ENCODE measurements at regions of chr3 and their contacts with region 1.

Region 1: DNA sequence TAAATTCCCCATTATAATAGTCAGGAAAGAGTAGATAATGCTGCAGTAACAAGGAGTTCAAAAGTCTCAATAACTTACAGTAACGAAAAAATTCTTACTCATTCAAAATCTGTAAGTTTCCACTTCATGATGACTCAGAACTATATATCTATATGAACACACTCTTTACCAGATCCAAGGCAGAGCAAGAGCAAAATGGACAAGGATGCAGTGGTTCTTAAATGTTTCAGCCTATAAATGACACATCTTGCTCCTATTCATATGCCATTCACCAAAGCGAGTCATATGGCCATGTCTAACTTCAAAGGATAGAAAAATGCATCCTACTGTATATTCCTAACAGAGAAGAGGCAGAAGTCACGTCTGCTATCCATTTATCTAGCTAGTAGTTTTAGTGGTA is 787.7 kb downstream of the NAALADL2 start:
- DNase-seq: no peak

Region 2: DNA sequence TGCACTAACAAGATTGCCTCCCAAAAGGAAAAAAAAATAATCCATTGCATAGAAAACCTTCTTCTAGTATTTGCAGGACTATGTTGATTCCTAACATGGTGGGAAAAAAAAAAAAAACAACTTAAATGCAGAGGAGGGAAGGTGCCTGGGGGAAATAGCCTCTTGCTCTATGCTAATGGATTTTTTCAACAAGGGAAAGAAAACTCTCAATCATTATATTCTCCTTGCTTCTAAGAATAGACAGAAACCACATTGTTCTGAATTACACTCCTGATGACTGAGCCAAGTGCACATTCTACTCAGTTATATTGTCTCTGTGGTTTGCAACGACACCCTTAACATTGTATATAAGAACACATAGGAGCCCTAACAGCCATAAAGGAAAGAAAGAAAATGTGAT is 27.5 kb before region 1 on chr3:
- intact Hi-C with region 1: loop called in 1 of 2 experiments (anchors 2 kb)
- DNase-seq: no peak

Region 3: DNA sequence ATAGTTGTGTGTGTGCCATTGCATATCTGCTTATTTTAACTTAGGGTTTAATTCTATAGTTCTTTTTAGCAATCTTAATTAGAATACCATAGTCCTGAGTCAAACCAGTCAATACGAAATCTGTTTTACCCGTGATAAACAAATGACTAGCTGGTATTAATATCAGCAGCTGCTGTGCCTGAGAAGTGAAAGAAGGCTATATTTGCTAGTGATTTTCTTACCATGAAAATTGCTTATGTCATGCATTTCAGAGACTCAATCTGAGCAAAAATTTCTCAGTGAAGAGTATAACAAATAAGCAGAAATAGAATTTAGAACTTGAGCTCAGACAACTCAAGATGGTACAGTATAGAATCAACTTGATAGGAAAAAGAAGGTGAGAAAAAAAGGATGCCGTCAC is 32.7 kb after region 1 on chr3:
- intact Hi-C with region 1: loop called in 1 of 2 experiments (anchors 2 kb)
- DNase-seq: no peak